ENCODE measurements at regions of chr4 and their contacts with region 1.

Region 1: GRCh38 chr4:151117371-151117962 is 18.0 kb downstream of the RPS3A start:
- DNase-seq: peak; percentile 77
- H3K4me3 Mint-ChIP-seq: no peak overlapping the region
- H3K27ac Mint-ChIP-seq: no peak overlapping the region
- H3K4me1 Mint-ChIP-seq: peaks cover 3% of the 10 kb centered on the region
- H3K27me3 Mint-ChIP-seq: no peaks in the 10 kb centered on the region

Region 2: DNA sequence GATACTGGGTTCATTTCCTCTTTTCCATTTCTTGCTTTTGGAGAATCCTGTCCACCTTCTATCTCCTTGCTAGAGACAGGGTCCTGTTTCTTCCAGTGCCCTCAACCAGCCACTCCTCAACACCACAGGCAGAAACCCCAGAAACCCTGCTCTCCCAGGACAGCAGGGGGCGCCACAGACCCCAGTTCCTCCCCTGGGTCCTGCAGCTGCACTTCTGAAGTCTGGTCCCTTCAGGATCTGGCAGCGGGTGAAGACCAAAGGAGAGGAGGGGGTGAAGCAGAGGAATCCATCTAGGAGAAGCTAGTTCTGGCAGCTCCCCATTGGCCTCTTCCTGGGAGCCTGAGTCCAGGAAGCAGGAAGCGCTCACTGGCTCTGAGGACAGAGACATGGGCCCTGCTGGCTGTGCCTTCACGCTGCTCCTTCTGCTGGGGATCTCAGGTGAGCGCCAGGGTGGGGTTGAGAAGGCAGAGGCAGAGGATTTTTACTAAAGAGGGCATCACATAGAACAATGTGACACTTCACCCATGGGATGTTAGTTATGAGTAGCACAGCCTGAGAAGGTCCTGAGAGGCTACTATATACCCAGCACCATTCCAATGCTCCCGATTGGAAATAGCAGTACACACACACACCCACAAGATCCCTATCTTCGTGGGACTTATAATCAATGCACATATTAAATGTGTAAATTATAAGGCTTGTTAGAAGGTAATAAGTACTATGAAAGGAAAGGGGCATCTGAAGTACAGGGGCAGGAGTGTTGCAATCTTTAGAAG is 159.5 kb after region 1 on chr4 and contains the start of gene PRSS48:
- CTCF ChIA-PET with region 1: interaction called, 8 read pairs
- intact Hi-C with region 1: loop called (anchors 5 kb)
- DNase-seq: peak; percentile 73
- H3K4me3 Mint-ChIP-seq: no peak within 1 kb of the TSS
- H3K27ac Mint-ChIP-seq: no peak within 1 kb of the TSS
- H3K4me1 Mint-ChIP-seq: no peaks in the 10 kb centered on the region
- H3K27me3 Mint-ChIP-seq: peaks cover 10% of the 10 kb centered on the region
- total RNA-seq, gene PRSS48: not detected

Region 3: GRCh38 chr4:151408630-151409469 is 291.4 kb after region 1 on chr4 and contains the start of gene FHIP1A:
- CTCF ChIA-PET with region 1: no interaction called
- intact Hi-C with region 1: loop called (anchors 5 kb)
- DNase-seq: peak; percentile 89
- H3K4me3 Mint-ChIP-seq: peak within 1 kb of the TSS; percentile 88
- H3K27ac Mint-ChIP-seq: peak within 1 kb of the TSS; percentile 60
- H3K4me1 Mint-ChIP-seq: peaks cover 22% of the 10 kb centered on the region
- H3K27me3 Mint-ChIP-seq: peaks cover 17% of the 10 kb centered on the region
- total RNA-seq, gene FHIP1A: 0.07 to 0.17 TPM

Region 4: GRCh38 chr4:151644622-151645021 is 527.2 kb after region 1 on chr4:
- CTCF ChIA-PET with region 1: no interaction called
- intact Hi-C with region 1: loop called (anchors 1 kb)
- DNase-seq: peak; percentile 32
- H3K4me3 Mint-ChIP-seq: no peak overlapping the region
- H3K27ac Mint-ChIP-seq: no peak overlapping the region
- H3K4me1 Mint-ChIP-seq: no peaks in the 10 kb centered on the region
- H3K27me3 Mint-ChIP-seq: no peaks in the 10 kb centered on the region

Region 5: GRCh38 chr4:152385551-152385950 is 1268.1 kb after region 1 on chr4:
- CTCF ChIA-PET with region 1: no interaction called
- intact Hi-C with region 1: loop called (anchors 10 kb)
- DNase-seq: peak; percentile 10
- H3K4me3 Mint-ChIP-seq: no peak overlapping the region
- H3K27ac Mint-ChIP-seq: no peak overlapping the region
- H3K4me1 Mint-ChIP-seq: peaks cover 13% of the 10 kb centered on the region
- H3K27me3 Mint-ChIP-seq: no peaks in the 10 kb centered on the region

Measured in activated naive CD4-positive, alpha-beta T cell treated with anti-CD3 and anti-CD28 coated beads for 36 hours (primary cell).